Naive thymus-derived CD4-positive, alpha-beta T cell (primary cell): ENCODE measurements at regions of chr1 and their contacts with region 1.

Region 1: GRCh38 chr1:156435545-156436141 is 64.9 kb downstream of the MEF2D start:
- DNase-seq: peak in 3 of 9 donors; percentile 31 to 44 (median 42)
- ATAC-seq: peak; percentile 55
- H3K4me3 ChIP-seq: peak overlapping the region; percentile 4
- H3K4me3 Mint-ChIP-seq: peak overlapping the region; percentile 78 to 95 (median 88)
- H3K27ac ChIP-seq: no peak overlapping the region
- H3K27ac Mint-ChIP-seq: peak overlapping the region in 2 of 9 donors; percentile 29 to 70
- H3K4me1 ChIP-seq: peaks cover 12 to 30% of the 10 kb centered on the region in 2 donors
- H3K4me1 Mint-ChIP-seq: peaks cover 13 to 40% (median 30%) of the 10 kb centered on the region in 7 donors
- H3K27me3 ChIP-seq: peaks cover 44 to 52% of the 10 kb centered on the region in 2 donors
- H3K27me3 Mint-ChIP-seq: peaks cover 83 to 97% (median 90%) of the 10 kb centered on the region in 5 donors

Region 2: GRCh38 chr1:156096640-156097391 is 338.8 kb before region 1 on chr1:
- CTCF ChIA-PET with region 1: no interaction called
- POLR2A ChIA-PET with region 1: no interaction called
- intact Hi-C with region 1: no loop called
- DNase-seq: peak; percentile 77 to 91 (median 80)
- ATAC-seq: peak; percentile 87
- H3K4me3 ChIP-seq: peak overlapping the region; percentile 10
- H3K4me3 Mint-ChIP-seq: peak overlapping the region; percentile 31 to 83 (median 72)
- H3K27ac ChIP-seq: peak overlapping the region; percentile 63
- H3K27ac Mint-ChIP-seq: peak overlapping the region; percentile 76 to 95 (median 91)
- H3K4me1 ChIP-seq: peaks cover 18 to 22% of the 10 kb centered on the region in 2 donors
- H3K4me1 Mint-ChIP-seq: peaks cover 18 to 45% (median 26%) of the 10 kb centered on the region in 7 donors
- H3K27me3 ChIP-seq: no peaks in the 10 kb centered on the region
- H3K27me3 Mint-ChIP-seq: peaks cover 0 to 52% (median 0%) of the 10 kb centered on the region in 5 donors

Region 3: GRCh38 chr1:156319664-156320063 is 116.0 kb before region 1 on chr1:
- CTCF ChIA-PET with region 1: no interaction called
- POLR2A ChIA-PET with region 1: no interaction called
- intact Hi-C with region 1: no loop called
- DNase-seq: peak in 3 of 9 donors; percentile 16 to 25 (median 23)
- ATAC-seq: no peak
- H3K4me3 ChIP-seq: no peak overlapping the region
- H3K4me3 Mint-ChIP-seq: no peak overlapping the region
- H3K27ac ChIP-seq: no peak overlapping the region
- H3K27ac Mint-ChIP-seq: no peak overlapping the region
- H3K4me1 ChIP-seq: no peaks in the 10 kb centered on the region
- H3K4me1 Mint-ChIP-seq: peaks cover 0 to 1% (median 0%) of the 10 kb centered on the region in 7 donors
- H3K27me3 ChIP-seq: no peaks in the 10 kb centered on the region
- H3K27me3 Mint-ChIP-seq: no peaks in the 10 kb centered on the region

Region 4: DNA sequence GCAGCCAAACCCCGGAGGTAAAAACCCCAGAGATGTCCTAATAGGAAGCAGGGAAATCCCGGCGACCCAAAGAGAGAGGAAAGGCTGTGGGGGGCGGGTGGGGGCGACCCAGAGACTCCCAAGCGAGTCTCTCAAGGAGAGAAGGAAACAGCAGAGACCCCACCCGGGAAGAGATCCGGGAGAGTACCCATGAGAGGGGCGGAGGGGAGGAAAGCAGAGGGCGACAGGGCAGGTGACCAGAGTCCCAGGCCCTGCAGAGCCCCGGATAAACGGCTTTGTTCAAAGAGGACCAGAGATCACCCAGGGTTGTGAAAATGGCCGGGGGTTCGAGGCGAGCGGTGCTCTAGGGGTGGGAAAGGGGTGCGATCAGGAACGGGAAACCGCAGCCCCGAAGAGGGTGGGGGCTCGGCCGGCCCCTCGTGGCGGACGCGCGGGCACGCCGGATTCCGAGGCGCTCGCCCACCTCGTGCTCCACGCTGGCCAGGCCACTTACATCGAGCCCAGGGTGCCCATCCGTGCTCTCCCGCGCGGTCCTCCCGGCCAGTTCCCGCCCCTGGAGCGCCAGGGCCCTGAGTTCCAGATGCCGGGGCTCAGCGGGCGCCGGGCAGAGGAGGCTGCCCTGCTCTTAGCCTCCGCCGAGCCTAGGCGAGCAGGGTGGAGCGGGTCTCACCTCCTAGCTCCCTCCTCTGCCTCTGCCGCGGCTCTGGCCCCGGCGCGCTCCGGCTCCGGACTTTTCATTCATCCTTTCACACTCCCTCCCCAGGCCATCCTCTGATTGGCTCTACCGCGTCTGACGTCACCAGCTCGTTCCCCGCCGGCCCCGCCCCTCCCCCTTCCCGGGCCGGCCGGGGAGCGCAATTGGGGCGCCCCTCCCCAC is 14.3 kb before region 1 on chr1:
- CTCF ChIA-PET with region 1: no interaction called
- POLR2A ChIA-PET with region 1: no interaction called
- intact Hi-C with region 1: loop called (anchors 2 kb)
- DNase-seq: peak in 8 of 9 donors; percentile 25 to 74 (median 38)
- ATAC-seq: peak; percentile 76
- H3K4me3 ChIP-seq: peak overlapping the region; percentile 77
- H3K4me3 Mint-ChIP-seq: peak overlapping the region; percentile 82 to 94 (median 87)
- H3K27ac ChIP-seq: no peak overlapping the region
- H3K27ac Mint-ChIP-seq: peak overlapping the region in 3 of 9 donors; percentile 38 to 66 (median 56)
- H3K4me1 ChIP-seq: peaks cover 15 to 24% of the 10 kb centered on the region in 2 donors
- H3K4me1 Mint-ChIP-seq: peaks cover 9 to 28% (median 16%) of the 10 kb centered on the region in 7 donors
- H3K27me3 ChIP-seq: peaks cover 0 to 37% of the 10 kb centered on the region in 2 donors
- H3K27me3 Mint-ChIP-seq: peaks cover 74 to 96% (median 81%) of the 10 kb centered on the region in 5 donors